K562 (cell line): ENCODE measurements at regions of chr15 and their contacts with region 1.

Region 1: DNA sequence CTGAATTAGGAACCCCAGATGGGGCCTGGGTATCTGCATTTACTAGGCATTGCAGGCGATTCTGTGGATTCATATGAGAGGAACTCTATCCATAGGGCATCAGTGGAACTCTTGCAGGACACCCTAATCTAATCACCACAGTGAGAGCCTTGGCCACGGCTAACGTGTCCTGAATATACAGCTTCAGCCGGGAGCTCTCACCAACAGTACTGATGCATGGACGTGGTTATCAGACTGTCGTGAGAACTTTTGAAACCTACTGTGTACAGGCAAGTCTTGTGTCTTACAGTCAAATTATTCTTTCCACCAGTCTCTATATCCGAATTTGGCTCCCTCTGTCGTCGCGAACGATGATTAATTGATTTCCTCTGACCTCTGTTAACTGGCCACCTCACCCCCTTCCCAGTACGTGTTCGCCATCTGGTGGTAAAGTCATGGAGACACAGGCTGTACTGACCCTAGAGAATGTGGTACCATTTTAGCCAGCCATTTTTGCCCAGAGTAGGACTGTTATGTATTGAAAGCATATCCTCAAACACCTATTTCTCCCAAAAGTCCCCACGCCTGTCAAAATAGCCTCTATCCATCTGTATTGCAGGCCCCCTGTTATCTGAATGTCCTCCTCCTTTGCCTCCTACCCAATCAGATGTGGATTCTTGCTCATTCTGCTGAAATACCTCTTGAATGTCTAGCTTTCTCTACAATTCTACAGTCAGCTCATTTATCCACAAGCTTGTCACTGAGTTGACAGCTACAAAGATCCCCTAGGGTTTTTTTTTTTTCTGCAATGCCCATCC is 39.7 kb downstream of the GLDN start:
- DNase-seq: peak; percentile 79 to 87 (median 83)
- ATAC-seq: peak; percentile 97
- H3K4me3 ChIP-seq: no peak overlapping the region
- H3K27ac ChIP-seq: no peak overlapping the region
- H3K4me1 ChIP-seq: no peaks in the 10 kb centered on the region; a peak in 1 of 5 replicates
- H3K27me3 ChIP-seq: peaks cover 10 to 45% of the 10 kb centered on the region in 2 experiments
- CTCF ChIP-seq: peak; percentile 93 to 99 (median 96)
- EP300 ChIP-seq: peak; percentile 38; the same call in 1 of the 2 replicates
- POLR2A ChIP-seq: no peak
- RAD21 ChIP-seq: peak; percentile 99

Region 2: DNA sequence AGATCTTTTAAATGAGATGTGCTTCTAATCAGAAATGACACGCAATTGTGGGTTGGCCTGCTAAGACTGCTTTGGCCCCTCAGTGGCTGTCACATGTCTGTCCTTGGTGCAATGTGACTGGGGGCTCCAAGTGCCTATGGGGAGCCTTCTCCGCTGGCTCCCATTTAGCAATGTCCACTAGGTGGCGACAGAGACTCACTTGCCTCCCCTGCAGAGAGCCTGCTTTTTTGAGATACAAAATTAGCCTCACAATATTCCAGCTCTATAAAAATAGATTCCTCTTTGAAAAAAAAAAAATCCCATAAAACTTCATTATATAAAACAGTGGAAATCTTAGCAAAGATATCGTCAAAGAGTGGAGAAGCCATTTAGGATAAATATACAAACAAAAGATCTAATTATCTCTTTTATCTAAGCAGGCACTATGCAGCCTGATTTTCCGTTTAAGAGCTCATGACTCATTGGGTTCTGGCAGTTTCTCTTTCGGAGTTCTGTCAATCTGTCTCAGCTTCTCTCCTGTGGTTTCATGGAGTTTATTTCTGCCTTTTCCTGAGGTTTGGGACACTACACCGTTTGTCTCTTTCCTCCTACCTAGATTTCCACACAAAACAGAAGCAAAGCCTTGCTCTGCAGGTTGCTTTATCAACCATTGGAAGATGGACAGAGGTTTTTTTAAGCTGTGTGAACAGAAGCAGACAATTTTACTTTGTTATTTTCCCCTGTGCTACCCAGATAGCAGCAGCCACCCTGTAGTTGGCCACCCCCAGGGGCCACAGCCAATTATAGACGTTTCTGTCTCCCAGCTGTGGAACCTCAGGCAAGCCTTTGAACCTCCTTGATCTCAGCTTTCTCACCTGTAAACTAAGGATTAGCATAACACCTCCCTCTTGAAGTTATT is 218.1 kb before region 1 on chr15:
- CTCF ChIA-PET with region 1: interaction called, 24 read pairs
- POLR2A ChIA-PET with region 1: no interaction called
- in situ Hi-C with region 1: loop called (anchors 5 kb)
- intact Hi-C with region 1: loop called (anchors 1 kb)
- DNase-seq: peak; percentile 78 to 89 (median 86)
- ATAC-seq: peak; percentile 99
- H3K4me3 ChIP-seq: no peak overlapping the region
- H3K27ac ChIP-seq: no peak overlapping the region
- H3K4me1 ChIP-seq: peaks cover 0 to 7% of the 10 kb centered on the region in 2 experiments; a peak in 1 of 5 replicates
- H3K27me3 ChIP-seq: peaks cover 3 to 6% of the 10 kb centered on the region in 2 experiments; a peak in 2 of 5 replicates
- CTCF ChIP-seq: peak; percentile 87 to 95 (median 88)
- EP300 ChIP-seq: no peak
- POLR2A ChIP-seq: no peak
- RAD21 ChIP-seq: peak; percentile 89 to 90

Region 3: GRCh38 chr15:51203797-51204196 is 177.4 kb before region 1 on chr15:
- CTCF ChIA-PET with region 1: no interaction called
- POLR2A ChIA-PET with region 1: no interaction called
- in situ Hi-C with region 1: no loop called
- intact Hi-C with region 1: no loop called
- DNase-seq: no peak
- ATAC-seq: no peak
- H3K4me3 ChIP-seq: no peak overlapping the region
- H3K27ac ChIP-seq: no peak overlapping the region
- H3K4me1 ChIP-seq: no peaks in the 10 kb centered on the region; a peak in 1 of 5 replicates
- H3K27me3 ChIP-seq: peaks cover 19 to 22% of the 10 kb centered on the region in 2 experiments
- CTCF ChIP-seq: no peak
- EP300 ChIP-seq: no peak
- POLR2A ChIP-seq: no peak
- RAD21 ChIP-seq: no peak

Region 4: DNA sequence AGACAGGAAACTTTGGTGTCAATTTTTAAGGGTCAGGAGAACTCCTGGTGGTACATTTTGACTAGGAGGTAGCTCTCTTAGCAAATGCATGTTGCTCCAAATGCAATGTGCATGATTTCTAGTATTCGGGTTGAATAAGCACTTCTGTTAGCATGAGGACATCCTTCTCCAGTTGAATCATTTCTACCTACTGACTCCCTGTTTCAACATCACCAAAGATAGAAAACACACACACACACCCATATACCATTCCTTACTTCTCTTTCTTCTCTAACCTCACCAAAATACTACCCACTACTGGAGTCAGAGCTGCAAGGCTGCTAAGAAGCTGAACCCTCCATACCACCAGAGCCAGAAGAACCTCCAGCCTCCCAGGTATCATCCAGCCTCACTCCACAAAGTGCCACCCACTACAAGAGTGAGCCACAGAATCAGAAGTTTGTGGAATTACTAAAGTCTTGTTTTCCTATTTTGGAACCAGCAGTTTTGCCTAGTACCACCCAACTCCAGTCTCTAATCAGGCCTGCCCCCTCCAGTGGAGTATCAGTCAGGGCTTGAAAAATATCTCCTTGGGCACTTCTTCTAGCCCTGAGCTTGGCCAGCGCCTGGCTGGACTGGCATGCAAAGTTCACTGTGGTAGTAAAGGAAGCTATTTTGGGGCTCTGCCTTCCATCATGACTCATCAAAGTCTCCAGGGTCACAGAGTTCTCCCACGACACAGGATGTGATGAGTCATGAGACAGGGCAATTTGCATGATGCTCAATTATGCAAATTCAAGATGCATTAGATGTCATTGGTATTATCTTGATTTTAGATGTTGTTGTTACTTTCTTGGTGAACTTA is 153.0 kb before region 1 on chr15:
- CTCF ChIA-PET with region 1: interaction called, 10 read pairs
- POLR2A ChIA-PET with region 1: interaction called, 3 read pairs
- in situ Hi-C with region 1: no loop called
- intact Hi-C with region 1: loop called (anchors 2 kb)
- DNase-seq: peak; percentile 74 to 88 (median 82)
- ATAC-seq: peak; percentile 95
- H3K4me3 ChIP-seq: no peak overlapping the region
- H3K27ac ChIP-seq: peak overlapping the region; percentile 82
- H3K4me1 ChIP-seq: peaks cover 11 to 31% of the 10 kb centered on the region in 2 experiments
- H3K27me3 ChIP-seq: peaks cover 0 to 3% of the 10 kb centered on the region in 2 experiments; a peak in 3 of 5 replicates
- CTCF ChIP-seq: no peak
- EP300 ChIP-seq: peak; percentile 67; the same call in 1 of the 2 replicates
- POLR2A ChIP-seq: no peak
- RAD21 ChIP-seq: no peak

Region 5: DNA sequence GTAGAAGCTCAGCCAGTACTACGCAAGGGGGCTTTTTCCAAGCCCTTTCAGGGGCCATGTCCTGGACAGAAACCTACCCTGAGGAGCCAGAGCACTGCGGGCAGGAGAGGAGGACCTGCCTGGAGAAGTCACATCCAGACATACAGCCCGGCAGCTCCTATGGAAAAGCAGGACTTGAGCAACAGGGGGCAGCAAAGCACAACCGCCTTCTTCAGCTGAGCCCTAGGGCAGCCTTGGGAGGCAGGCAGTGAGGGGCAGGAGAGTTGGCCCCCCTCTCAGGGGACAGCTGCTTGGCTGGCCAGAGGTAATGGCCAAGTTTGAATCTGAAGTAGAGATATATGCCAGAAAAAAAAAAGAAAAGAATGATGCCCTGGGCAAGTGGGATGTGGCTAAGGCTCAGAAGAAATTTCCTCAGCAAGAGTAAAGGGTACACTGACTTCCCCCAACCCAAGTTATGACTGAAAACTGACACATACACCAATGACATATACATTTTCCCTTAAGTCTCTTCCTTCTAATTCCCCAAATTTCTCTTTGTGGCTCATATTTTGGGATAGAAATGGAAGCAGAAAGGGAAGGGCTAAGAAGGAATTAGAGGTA is 99.7 kb before region 1 on chr15:
- CTCF ChIA-PET with region 1: interaction called, 23 read pairs
- POLR2A ChIA-PET with region 1: no interaction called
- in situ Hi-C with region 1: loop called (anchors 5 kb)
- intact Hi-C with region 1: loop called (anchors 1 kb)
- DNase-seq: peak; percentile 29 to 67 (median 48)
- ATAC-seq: peak; percentile 98
- H3K4me3 ChIP-seq: no peak overlapping the region
- H3K27ac ChIP-seq: no peak overlapping the region
- H3K4me1 ChIP-seq: no peaks in the 10 kb centered on the region
- H3K27me3 ChIP-seq: peaks cover 13 to 31% of the 10 kb centered on the region in 2 experiments
- CTCF ChIP-seq: peak; percentile 69 to 76 (median 73)
- EP300 ChIP-seq: no peak
- POLR2A ChIP-seq: no peak
- RAD21 ChIP-seq: peak; percentile 70 to 78

Region 6: DNA sequence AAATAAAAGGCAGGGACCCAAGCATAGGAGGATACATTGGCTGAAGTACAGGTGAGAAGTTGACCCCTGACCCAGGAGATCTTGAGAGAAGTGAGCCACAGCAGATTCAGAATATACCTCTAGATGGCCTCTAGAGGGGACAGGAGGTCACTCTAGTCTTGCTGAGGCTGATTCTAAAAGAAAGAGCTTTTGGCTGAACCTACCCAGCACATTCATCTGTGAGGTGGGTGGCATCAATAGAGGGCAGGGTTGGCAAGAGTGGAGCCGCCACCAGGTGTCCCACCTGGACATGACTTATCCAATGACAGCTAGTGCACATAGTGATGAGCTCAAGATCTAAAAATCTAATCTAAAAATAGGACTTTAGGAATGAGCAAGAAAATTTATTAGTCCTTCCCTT is 94.4 kb before region 1 on chr15:
- CTCF ChIA-PET with region 1: interaction called, 23 read pairs
- POLR2A ChIA-PET with region 1: no interaction called
- in situ Hi-C with region 1: loop called (anchors 5 kb)
- intact Hi-C with region 1: loop called (anchors 1 kb)
- DNase-seq: no peak
- ATAC-seq: no peak
- H3K4me3 ChIP-seq: no peak overlapping the region
- H3K27ac ChIP-seq: no peak overlapping the region
- H3K4me1 ChIP-seq: no peaks in the 10 kb centered on the region
- H3K27me3 ChIP-seq: peaks cover 6 to 50% of the 10 kb centered on the region in 2 experiments; a peak in 4 of 5 replicates
- CTCF ChIP-seq: peak in 2 of 3 experiments; percentile 9 to 12; a peak in 2 of 6 replicates
- EP300 ChIP-seq: no peak
- POLR2A ChIP-seq: no peak
- RAD21 ChIP-seq: no peak; a peak in 1 of 4 replicates

Region 7: GRCh38 chr15:51299187-51300066 is 81.8 kb before region 1 on chr15:
- CTCF ChIA-PET with region 1: no interaction called
- POLR2A ChIA-PET with region 1: no interaction called
- in situ Hi-C with region 1: no loop called
- intact Hi-C with region 1: loop called (anchors 5 kb)
- DNase-seq: no peak
- ATAC-seq: no peak
- H3K4me3 ChIP-seq: no peak overlapping the region
- H3K27ac ChIP-seq: no peak overlapping the region
- H3K4me1 ChIP-seq: no peaks in the 10 kb centered on the region
- H3K27me3 ChIP-seq: peaks cover 18 to 47% of the 10 kb centered on the region in 2 experiments; a peak in 4 of 5 replicates
- CTCF ChIP-seq: no peak
- EP300 ChIP-seq: no peak
- POLR2A ChIP-seq: no peak
- RAD21 ChIP-seq: 0 out of 4 replicates have a peak, but pooled peaks have one; percentile 18 to 21

Region 8: DNA sequence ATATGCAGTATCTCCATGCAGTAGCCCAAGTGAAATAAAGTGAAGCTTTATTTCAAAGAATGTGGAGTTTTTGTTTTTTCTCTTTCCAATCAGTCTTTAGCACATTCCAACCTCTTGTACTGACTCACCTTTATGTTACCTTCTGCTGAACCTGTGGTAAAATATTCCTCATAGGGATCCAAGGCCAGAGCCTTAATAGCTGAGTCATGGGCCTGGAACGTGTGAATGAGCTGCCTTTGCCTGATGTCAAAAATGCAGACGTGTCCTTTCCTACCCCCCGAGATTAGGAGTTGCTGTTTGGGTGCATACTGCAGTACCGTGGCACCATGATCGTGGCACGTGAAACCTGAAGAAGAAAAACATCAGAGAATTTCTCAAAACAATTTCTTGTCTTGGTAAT is 68.8 kb after region 1 on chr15:
- CTCF ChIA-PET with region 1: no interaction called
- POLR2A ChIA-PET with region 1: no interaction called
- in situ Hi-C with region 1: no loop called
- intact Hi-C with region 1: no loop called
- DNase-seq: no peak
- ATAC-seq: no peak; the same call in 2 of the 3 replicates
- H3K4me3 ChIP-seq: no peak overlapping the region
- H3K27ac ChIP-seq: no peak overlapping the region; the same call in 2 of the 3 replicates
- H3K4me1 ChIP-seq: no peaks in the 10 kb centered on the region
- H3K27me3 ChIP-seq: no peaks in the 10 kb centered on the region
- CTCF ChIP-seq: no peak
- EP300 ChIP-seq: no peak
- POLR2A ChIP-seq: no peak
- RAD21 ChIP-seq: no peak

Region 9: GRCh38 chr15:51499379-51499976 is 118.3 kb after region 1 on chr15:
- CTCF ChIA-PET with region 1: no interaction called
- POLR2A ChIA-PET with region 1: no interaction called
- in situ Hi-C with region 1: no loop called
- intact Hi-C with region 1: loop called (anchors 5 kb)
- DNase-seq: peak; percentile 22 to 45 (median 40)
- ATAC-seq: peak; percentile 89
- H3K4me3 ChIP-seq: no peak overlapping the region
- H3K27ac ChIP-seq: no peak overlapping the region
- H3K4me1 ChIP-seq: no peaks in the 10 kb centered on the region
- H3K27me3 ChIP-seq: no peaks in the 10 kb centered on the region
- CTCF ChIP-seq: peak; percentile 42 to 61 (median 59)
- EP300 ChIP-seq: no peak
- POLR2A ChIP-seq: no peak
- RAD21 ChIP-seq: peak in 1 of 2 experiments; percentile 49; a peak in 3 of 4 replicates